ENCODE measurements at regions of chr16 and their contacts with region 1.

Region 1: DNA sequence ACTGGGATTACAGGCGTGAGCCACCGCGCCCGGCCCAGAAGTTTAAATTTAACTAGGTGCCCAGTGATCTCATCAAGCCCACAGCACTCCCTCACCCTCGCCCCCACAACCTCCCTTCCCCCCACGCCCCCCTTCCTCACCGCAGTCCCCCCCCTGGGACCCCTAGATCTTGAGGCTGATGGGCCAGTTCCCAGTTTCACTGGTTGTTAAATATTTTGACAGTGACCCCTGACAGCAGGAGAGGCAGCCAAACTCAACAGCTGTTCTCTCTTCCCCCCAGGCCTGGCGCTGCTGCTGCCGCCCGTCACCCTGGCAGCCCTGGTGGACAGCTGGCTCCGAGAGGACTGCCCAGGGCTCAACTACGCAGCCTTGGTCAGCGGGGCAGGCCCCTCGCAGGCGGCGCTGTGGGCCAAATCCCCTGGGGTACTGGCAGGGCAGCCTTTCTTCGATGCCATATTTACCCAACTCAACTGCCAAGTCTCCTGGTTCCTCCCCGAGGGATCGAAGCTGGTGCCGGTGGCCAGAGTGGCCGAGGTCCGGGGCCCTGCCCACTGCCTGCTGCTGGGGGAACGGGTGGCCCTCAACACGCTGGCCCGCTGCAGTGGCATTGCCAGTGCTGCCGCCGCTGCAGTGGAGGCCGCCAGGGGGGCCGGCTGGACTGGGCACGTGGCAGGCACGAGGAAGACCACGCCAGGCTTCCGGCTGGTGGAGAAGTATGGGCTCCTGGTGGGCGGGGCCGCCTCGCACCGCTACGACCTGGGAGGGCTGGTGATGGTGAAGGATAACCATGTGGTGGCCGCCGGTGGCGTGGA is 15.6 kb downstream of the QPRT start:
- DNase-seq: no peak
- H3K4me3 ChIP-seq: no peak overlapping the region
- CTCF ChIP-seq: no peak

Region 2: DNA sequence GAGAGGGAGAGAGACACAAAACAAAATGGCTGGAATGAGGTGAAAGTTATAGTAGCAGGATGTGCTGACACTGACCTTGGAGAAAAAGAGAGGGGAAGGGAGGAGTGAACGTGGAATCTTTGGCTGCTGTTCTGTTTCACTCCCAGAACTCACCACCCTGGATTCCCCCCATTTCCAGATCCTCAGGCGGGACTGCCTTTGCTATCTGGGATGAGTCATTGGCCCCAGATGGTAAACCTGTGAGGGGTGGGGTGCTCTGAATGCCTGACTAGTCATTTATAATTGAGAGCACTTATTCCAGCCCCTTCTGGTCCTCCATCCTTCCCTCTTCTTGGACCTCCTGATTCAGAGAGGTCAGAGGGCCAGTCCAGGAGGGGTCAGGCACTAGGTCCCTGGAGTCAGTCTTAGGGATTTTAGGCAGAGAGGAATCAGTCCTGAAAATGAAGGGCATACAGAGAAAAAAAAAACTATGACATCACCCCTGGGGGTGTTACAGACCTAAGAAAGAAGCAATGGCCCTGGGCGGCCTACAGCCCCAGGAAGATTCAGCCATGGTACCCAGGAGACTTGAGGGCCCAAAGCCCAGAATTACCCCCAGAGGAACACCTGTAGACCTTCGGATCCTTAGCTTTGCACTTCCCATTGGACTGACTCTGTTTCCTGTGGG is 81.3 kb after region 1 on chr16:
- in situ Hi-C with region 1: no loop called
- DNase-seq: no peak
- H3K4me3 ChIP-seq: no peak overlapping the region
- CTCF ChIP-seq: no peak

Region 3: DNA sequence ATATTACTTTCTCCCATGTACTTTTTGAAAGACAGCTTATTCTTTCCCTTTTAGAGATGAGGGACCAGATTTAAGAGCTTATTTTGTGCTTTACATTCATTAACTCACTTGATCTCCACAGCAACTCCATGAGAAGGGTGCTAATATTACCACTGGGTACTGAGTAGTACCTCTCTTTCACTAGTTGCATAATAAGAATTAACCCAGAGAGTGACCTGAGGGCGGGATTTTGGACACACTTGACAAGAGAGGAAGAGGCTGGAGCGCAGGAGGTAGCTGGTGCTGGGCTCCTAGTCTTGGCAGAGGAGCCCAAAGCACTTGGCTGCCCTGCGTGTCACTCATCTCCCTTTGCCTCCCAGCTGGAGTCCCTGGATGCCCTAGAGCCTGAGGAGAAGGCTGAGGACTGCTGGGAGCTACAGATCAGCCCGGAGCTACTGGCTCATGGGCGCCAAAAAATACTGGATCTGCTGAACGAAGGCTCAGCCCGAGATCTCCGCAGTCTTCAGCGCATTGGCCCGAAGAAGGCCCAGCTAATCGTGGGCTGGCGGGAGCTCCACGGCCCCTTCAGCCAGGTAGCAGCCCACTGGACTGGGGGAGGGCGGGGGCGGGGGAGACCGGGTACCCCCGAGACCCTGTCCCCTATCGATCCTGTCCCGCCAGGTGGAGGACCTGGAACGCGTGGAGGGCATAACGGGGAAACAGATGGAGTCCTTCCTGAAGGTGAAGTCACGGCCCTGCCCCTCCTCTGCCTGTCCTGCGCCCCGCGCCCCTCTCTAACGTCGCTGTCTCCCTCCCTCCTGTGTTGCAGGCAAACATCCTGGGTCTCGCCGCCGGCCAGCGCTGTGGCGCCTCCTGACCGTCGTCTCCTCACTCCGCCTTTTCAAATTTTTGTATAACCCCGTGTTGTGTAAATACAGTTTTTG is 110.1 kb after region 1 on chr16:
- in situ Hi-C with region 1: loop called (anchors 5 kb)
- DNase-seq: no peak
- H3K4me3 ChIP-seq: peak overlapping the region; percentile 82
- CTCF ChIP-seq: peak; percentile 4